ENCODE measurements at regions of chr13 and their contacts with region 1.

Region 1: DNA sequence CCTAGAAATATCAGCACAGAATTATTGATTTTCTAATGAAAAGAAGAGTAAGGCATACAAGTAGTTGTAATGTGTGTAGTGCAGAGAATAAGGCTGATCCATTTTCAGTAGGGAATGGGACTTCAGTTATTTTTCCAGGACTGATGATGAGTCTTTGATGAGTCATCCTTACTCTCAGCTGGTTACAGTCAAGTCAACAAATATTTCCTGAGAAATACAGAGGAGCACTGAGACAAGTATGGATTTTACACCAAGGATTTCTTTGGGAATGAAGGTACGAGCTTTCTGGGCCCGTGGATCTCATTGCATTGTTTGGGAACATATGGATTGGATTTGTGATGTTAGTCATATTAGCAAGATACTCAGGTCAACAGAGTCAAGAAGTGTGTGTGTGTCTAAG is 502.7 kb downstream of the FGF9 start:
- DNase-seq: no peak
- H3K4me3 Mint-ChIP-seq: no peak overlapping the region
- H3K27ac Mint-ChIP-seq: peak overlapping the region; percentile 50
- H3K4me1 Mint-ChIP-seq: peaks cover 20% of the 10 kb centered on the region
- H3K27me3 Mint-ChIP-seq: no peaks in the 10 kb centered on the region
- CTCF ChIP-seq: no peak

Region 2: GRCh38 chr13:22114630-22115311 is 58.8 kb before region 1 on chr13:
- CTCF ChIA-PET with region 1: no interaction called
- POLR2A ChIA-PET with region 1: no interaction called
- intact Hi-C with region 1: loop called (anchors 10 kb)
- DNase-seq: no peak
- H3K4me3 Mint-ChIP-seq: no peak overlapping the region
- H3K27ac Mint-ChIP-seq: no peak overlapping the region
- H3K4me1 Mint-ChIP-seq: peaks cover 13% of the 10 kb centered on the region
- H3K27me3 Mint-ChIP-seq: peaks cover 11% of the 10 kb centered on the region
- CTCF ChIP-seq: no peak

Region 3: GRCh38 chr13:22243469-22244163 is 70.0 kb after region 1 on chr13:
- CTCF ChIA-PET with region 1: no interaction called
- POLR2A ChIA-PET with region 1: no interaction called
- intact Hi-C with region 1: no loop called
- DNase-seq: no peak
- H3K4me3 Mint-ChIP-seq: no peak overlapping the region
- H3K27ac Mint-ChIP-seq: no peak overlapping the region
- H3K4me1 Mint-ChIP-seq: no peaks in the 10 kb centered on the region
- H3K27me3 Mint-ChIP-seq: no peaks in the 10 kb centered on the region
- CTCF ChIP-seq: no peak

Measured in MCF 10A (cell line).